Right ventricle myocardium superior (tissue), 1 donor: ENCODE measurements at regions of chr5 and their contacts with region 1.

Region 1: DNA sequence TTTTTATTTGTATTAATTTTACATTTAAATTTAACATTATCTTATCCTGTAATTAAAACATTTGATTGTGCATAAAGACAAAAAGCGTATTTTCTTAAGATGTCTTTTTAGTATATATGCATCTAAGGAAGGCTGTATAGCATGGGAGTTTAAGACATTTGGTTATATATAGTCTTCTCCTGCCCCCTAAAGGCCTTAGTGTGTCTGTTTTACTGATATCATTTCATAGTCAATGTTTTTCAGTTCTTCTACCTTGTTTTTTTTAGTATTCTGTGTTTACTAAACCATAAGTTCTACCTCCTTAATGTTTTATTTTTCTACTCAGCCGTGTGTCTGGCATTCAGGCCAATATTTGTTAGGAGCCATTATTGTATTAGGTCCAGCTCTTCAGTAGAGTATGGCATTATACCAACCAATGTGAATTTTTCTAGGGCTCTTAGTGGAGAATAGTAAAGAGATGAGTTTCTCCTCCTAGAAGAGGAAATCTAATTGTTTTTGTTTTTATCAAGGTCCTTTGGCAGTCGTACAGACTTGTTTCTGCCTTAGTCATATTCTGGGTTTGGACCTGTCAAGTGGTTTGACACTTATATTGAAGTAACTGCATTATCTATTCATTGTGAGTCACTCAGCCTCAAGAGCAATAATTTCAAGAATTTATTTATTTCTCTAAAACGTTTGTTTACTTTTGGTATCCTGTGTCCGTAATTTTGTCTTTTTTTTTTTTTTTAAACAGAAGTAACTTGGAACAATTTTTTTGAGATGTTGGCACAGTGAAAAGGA is 74.8 kb downstream of the SLF1 start:
- DNase-seq: no peak
- ATAC-seq: peak; percentile 74

Region 2: GRCh38 chr5:94524841-94525697 is 168.2 kb before region 1 on chr5:
- intact Hi-C with region 1: loop called (anchors 5 kb)
- DNase-seq: no peak
- ATAC-seq: peak; percentile 46

Region 3: DNA sequence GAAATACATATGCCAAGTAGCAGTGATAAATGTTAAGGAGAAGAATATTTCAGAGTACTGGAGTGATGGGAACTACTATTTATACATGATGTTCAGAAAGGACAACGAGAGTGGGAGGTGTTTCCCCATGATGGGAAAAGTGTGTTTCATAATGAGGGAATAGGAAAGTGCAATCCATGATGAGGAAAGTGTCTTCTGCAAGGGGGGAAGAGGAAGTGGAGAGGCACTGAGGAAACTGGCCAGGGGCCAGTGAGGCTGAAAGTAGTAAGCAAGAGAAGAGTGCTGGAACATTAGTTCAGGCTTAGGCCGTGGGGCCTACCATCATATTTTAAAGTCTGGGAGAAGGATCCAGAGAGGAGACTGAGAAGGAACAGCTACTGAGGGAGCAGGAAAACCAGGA is 252.4 kb after region 1 on chr5:
- intact Hi-C with region 1: no loop called
- DNase-seq: peak; percentile 76
- ATAC-seq: peak; percentile 43

Region 4: GRCh38 chr5:94983861-94984535 is 290.8 kb after region 1 on chr5:
- intact Hi-C with region 1: no loop called
- DNase-seq: no peak
- ATAC-seq: no peak